ENCODE measurements at regions of chr4 and their contacts with region 1.

Region 1: GRCh38 chr4:87087420-87087819 is 133.0 kb downstream of the KLHL8 start:
- DNase-seq: no peak
- ATAC-seq: no peak
- H3K4me3 ChIP-seq: no peak overlapping the region
- H3K27ac ChIP-seq: no peak overlapping the region
- H3K4me1 ChIP-seq: peaks cover 17% of the 10 kb centered on the region
- H3K27me3 ChIP-seq: no peaks in the 10 kb centered on the region
- CTCF ChIP-seq: no peak
- POLR2A ChIP-seq: no peak

Region 2: DNA sequence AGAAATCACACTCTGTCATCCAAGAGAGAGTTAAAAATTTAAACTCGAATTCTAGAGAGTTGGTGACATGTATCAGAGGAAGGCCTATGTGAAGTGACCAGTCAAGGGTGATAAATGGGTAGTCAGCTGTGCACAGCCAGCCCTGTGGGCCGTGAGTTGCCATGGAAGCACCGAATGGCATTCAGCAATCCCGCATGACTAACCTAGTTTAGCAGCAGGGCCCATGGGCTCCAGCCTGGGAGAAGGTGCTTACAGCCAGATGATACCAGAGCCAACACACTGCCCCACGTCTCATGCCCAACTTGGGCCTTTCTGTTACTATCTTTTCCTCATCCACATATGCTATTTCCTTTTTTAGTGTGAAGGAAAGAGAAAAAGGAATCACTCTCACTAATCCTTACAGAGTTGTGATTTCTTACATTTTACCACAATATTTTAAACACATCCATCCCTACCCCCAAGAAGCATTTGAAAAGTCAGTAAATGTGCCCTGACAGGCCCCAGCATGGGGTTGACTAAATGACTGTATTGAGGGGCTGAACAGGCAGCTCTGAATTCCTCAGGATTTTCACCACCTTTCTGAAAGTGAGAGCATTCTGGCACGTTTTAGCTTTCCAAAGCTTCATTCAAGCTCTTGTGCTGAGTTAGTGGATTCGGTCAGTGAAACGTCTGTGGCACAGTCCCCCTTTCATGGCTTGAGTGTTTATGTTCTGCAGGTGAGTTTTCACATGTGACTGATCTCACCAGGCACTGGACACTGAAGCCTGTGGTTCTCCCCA is 48.4 kb before region 1 on chr4:
- intact Hi-C with region 1: loop called (anchors 10 kb)
- DNase-seq: peak; percentile 59 to 84 (median 81)
- ATAC-seq: peak; percentile 90
- H3K4me3 ChIP-seq: no peak overlapping the region
- H3K27ac ChIP-seq: peak overlapping the region; percentile 27 to 72 (median 38)
- H3K4me1 ChIP-seq: peaks cover 77% of the 10 kb centered on the region
- H3K27me3 ChIP-seq: no peaks in the 10 kb centered on the region
- CTCF ChIP-seq: no peak
- POLR2A ChIP-seq: no peak

Measured in body of pancreas (tissue), 4 donors.